ENCODE measurements at regions of chr10 and their contacts with region 1.

Region 1: DNA sequence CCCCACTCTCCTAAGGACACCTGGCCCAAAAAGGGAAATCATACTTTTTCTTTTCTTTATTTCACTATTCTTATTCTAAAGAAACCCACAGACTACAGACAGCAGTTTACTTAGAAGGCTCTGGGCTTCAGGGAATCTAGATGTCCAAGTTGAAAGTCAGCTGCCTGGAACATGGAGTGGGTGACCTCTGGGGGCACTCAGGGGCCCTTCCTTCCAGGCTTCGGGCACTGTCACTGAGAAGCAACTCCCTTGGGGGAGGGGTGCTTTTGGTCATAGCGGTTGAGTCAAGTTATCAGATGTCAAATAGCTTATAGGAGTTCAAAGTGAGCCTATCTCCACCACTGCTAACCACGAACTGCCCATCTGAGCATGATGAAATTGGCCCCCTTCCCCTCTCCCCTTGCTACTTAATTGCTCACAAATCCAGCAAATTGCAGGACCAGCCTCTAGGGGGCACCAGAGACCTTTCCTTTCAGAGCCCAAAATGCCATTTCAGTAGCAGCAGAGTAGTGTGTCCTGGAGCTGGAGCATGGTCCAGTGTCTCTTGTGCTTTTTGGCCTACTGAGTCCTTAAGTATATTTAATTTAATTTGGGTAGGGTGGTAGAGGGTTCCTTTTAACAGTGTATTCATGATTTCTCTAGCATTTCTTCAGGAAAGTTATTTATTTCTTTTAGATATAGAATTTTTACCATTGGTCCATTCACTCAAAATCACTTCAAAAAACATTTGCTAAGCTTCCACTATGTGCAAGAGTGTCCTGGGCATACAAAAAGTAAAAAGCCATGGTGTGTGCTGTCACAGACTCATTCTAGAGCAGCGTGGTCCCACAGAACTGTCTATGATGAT is 463.8 kb downstream of the KCNMA1 start:
- H3K4me3 Mint-ChIP-seq: no peak overlapping the region
- H3K27ac Mint-ChIP-seq: no peak overlapping the region
- H3K4me1 Mint-ChIP-seq: no peaks in the 10 kb centered on the region
- H3K27me3 Mint-ChIP-seq: peaks cover 2% of the 10 kb centered on the region

Region 2: DNA sequence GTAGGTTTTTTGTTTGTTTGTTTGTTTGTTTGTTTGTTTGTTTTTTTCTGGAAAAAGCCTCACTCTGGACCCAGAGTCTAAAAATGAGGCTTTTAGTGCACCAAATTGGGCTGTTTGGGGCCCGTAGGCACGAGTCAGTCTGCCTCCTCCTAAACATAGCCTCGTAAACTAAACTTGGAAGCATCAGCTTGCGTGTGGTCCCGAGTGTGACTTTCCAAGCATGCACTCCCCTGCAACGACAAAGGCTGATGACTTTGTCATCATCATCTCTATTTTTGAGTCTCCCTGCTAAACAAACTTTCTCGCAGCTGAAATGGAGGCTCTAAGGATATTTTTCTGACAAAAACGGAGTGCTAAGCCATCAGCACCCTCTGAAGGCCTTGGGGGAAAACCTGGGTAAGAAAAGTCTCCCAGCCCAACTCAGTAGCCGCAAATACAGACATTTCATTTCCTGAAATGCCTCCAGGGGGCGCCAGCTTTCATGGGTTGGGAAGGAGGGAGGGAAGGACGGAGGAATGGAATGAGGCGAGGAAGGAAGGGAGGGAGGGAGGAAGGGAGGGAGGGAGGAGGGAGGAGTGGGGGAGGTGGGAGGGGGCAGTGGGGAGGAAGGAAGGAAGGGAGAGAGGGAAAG is 217.9 kb after region 1 on chr10:
- intact Hi-C with region 1: loop called (anchors 2 kb)
- H3K4me3 Mint-ChIP-seq: no peak overlapping the region
- H3K27ac Mint-ChIP-seq: no peak overlapping the region
- H3K4me1 Mint-ChIP-seq: peaks cover 3% of the 10 kb centered on the region
- H3K27me3 Mint-ChIP-seq: peaks cover 30% of the 10 kb centered on the region

Region 3: DNA sequence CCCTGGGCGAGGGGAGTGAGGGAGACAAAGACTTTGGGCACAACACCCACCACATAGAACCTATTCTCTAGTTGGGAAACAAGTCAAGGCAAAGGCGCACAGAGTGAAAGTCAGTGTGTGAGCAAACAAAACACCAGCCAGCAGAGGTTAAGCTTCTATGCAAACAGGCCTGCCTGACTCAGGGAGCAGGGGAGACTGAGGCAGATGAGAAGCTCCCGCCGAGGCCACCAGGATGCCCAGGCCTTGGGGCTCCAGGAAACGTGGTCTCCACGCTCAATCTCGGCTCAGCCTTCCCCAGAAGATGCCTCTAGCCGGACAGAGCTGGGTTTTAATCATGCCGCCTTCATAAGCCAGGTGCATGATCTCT is 537.8 kb after region 1 on chr10:
- intact Hi-C with region 1: loop called (anchors 2 kb)
- H3K4me3 Mint-ChIP-seq: no peak overlapping the region
- H3K27ac Mint-ChIP-seq: no peak overlapping the region
- H3K4me1 Mint-ChIP-seq: peaks cover 12% of the 10 kb centered on the region
- H3K27me3 Mint-ChIP-seq: peaks cover 57% of the 10 kb centered on the region

Measured in dendritic cell treated with granulocyte-macrophage colony-stimulating factor and Interleukin-4, amounts not matched to agents 40 ng/mL and 50 ng/mL, for 4 days (primary cell).